CD4-positive, alpha-beta memory T cell (primary cell): ENCODE measurements at regions of chr10 and their contacts with region 1.

Region 1: GRCh38 chr10:109956454-109957091 is 33.3 kb upstream of the XPNPEP1 start:
- DNase-seq: peak in 4 of 5 donors; percentile 11 to 32 (median 14)
- H3K4me3 ChIP-seq: no peak overlapping the region
- H3K4me3 Mint-ChIP-seq: no peak overlapping the region
- H3K27ac ChIP-seq: no peak overlapping the region
- H3K27ac Mint-ChIP-seq: peak overlapping the region in 1 of 7 donors; percentile 24
- H3K4me1 ChIP-seq: no peaks in the 10 kb centered on the region
- H3K4me1 Mint-ChIP-seq: peaks cover 0 to 4% (median under 1%) of the 10 kb centered on the region in 4 donors
- H3K27me3 ChIP-seq: no peaks in the 10 kb centered on the region
- H3K27me3 Mint-ChIP-seq: no peaks in the 10 kb centered on the region

Region 2: DNA sequence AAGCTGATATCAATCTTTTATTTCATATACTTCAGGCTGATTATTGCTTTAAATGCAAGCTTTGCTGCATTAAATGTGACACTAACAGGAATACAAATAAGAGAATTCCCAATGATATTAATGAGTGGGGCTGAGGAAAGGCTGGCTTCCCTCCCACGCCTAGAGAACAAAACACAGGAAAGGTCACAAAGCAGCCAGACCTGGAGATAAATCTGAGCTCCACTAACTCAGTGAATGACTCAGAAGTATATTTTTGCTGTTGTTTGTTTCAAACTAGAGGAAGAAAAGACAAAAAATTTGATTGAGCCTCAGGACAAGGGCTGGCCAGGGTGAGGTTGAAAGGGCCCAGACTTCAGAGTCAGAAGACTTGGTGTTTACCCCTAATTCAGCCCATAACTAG is 121.3 kb before region 1 on chr10:
- CTCF ChIA-PET with region 1: no interaction called
- POLR2A ChIA-PET with region 1: no interaction called
- intact Hi-C with region 1: no loop called
- DNase-seq: no peak
- H3K4me3 ChIP-seq: no peak overlapping the region
- H3K4me3 Mint-ChIP-seq: no peak overlapping the region
- H3K27ac ChIP-seq: no peak overlapping the region
- H3K27ac Mint-ChIP-seq: no peak overlapping the region
- H3K4me1 ChIP-seq: no peaks in the 10 kb centered on the region
- H3K4me1 Mint-ChIP-seq: no peaks in the 10 kb centered on the region
- H3K27me3 ChIP-seq: no peaks in the 10 kb centered on the region
- H3K27me3 Mint-ChIP-seq: peaks cover 8 to 10% of the 10 kb centered on the region in 2 donors

Region 3: GRCh38 chr10:109922976-109923921 is 33.3 kb before region 1 on chr10 and contains the start of gene XPNPEP1:
- CTCF ChIA-PET with region 1: no interaction called
- POLR2A ChIA-PET with region 1: no interaction called
- intact Hi-C with region 1: loop called (anchors 5 kb)
- DNase-seq: peak; percentile 75 to 83 (median 79)
- H3K4me3 ChIP-seq: peak within 1 kb of the TSS; percentile 68 to 74
- H3K4me3 Mint-ChIP-seq: peak within 1 kb of the TSS; percentile 88 to 95 (median 92)
- H3K27ac ChIP-seq: peak within 1 kb of the TSS; percentile 86
- H3K27ac Mint-ChIP-seq: peak within 1 kb of the TSS; percentile 86 to 98 (median 96)
- H3K4me1 ChIP-seq: peaks cover 54% of the 10 kb centered on the region
- H3K4me1 Mint-ChIP-seq: peaks cover 39 to 57% (median 47%) of the 10 kb centered on the region in 4 donors
- H3K27me3 ChIP-seq: no peaks in the 10 kb centered on the region
- H3K27me3 Mint-ChIP-seq: no peaks in the 10 kb centered on the region
- total RNA-seq, gene XPNPEP1: 59.0 to 63.3 TPM

Region 4: DNA sequence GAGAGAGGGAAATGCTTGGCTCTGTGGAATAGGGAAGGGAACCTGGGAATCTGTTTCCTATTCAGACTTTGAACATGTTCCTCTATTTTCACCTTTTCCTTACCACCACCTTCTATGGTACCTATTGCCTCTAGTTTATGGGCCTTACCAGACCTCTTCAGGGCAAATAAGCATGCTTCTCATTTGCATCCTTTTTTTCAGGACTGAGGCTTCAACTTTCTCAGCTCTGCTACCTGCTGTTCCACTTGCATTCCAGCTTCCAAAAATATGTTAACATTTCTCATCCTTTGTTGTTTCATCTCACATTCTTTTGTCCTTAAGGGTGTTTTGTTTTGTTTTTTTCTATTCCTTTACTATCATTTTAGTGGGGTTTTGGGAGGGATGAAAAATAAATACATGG is 172.9 kb after region 1 on chr10:
- CTCF ChIA-PET with region 1: no interaction called
- POLR2A ChIA-PET with region 1: no interaction called
- intact Hi-C with region 1: no loop called
- DNase-seq: no peak
- H3K4me3 ChIP-seq: no peak overlapping the region
- H3K4me3 Mint-ChIP-seq: no peak overlapping the region
- H3K27ac ChIP-seq: no peak overlapping the region
- H3K27ac Mint-ChIP-seq: peak overlapping the region in 3 of 7 donors; percentile 59 to 77 (median 75)
- H3K4me1 ChIP-seq: no peaks in the 10 kb centered on the region
- H3K4me1 Mint-ChIP-seq: peaks cover 0 to 4% (median 0%) of the 10 kb centered on the region in 4 donors
- H3K27me3 ChIP-seq: no peaks in the 10 kb centered on the region
- H3K27me3 Mint-ChIP-seq: no peaks in the 10 kb centered on the region